AG04450 (cell line): ENCODE measurements at regions of chr3 and their contacts with region 1.

Region 1: DNA sequence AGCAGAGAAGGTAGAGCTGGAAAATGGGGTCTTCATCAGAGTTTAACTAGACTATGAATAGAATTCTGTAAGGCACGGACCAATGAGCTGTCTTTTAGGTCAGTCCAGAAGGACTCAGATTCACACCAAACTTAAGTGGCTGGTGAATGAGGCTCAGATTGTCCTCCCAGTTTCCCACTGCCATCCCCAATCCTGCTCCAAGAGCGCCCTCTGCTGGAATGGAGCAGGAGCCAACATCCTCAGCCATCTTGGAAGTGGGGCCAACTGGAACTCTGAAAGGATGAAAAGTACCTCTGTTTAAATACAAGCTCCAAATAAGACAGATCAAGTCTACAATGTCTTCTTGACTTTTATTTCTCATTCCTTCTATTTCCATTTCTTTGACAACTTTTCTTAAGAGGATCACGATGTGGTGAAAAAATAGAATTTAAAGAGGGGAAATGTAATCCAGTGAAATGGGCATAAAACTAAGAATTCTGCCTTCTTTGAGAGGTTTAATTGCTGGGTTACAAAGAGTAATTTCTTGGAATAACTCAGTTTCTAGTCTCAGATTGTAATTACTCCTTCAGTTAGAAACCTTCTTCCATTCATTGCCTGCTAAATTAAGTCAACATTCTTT is 217.1 kb upstream of the TPRG1 start:
- DNase-seq: peak; percentile 71
- H3K4me3 ChIP-seq: no peak overlapping the region
- H3K27ac ChIP-seq: no peak overlapping the region
- H3K27me3 ChIP-seq: no peaks in the 10 kb centered on the region
- CTCF ChIP-seq: peak; percentile 97

Region 2: DNA sequence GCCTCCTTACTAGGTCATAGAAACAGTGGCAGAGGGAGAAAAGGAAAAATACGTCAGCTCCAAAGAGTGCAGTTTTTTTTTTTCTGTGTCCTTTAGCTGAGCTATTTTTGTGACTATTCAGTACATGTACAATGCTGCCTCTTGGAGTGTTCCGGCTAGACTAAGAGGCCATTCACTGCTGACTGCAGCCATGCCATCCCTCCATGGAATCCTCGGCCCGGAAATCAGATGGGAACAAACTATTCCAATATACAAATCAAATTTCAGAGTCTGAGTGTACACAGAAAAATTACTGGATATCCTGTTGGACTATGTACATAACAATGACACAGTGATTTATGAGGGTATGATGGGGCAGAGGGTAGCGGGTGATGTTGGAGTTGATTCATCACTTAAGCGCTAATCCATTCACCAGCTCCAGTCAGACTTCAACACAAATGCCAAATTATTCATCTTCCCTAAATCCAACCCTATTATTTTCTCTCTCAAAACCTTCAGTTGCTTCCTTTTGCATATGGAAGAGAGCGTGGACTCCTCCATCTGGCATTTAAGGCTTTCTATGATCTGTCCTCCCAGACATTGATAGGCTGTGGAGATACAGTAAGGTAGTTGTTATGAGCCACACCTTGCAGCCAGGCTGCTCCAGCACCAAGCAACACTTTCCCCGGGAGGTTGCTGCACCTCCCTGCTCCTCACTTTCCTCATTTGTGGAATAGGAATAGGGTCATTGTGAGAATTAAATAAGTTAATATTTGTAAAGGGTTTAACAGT is 691.6 kb before region 1 on chr3:
- CTCF ChIA-PET with region 1: interaction called, 14 read pairs
- POLR2A ChIA-PET with region 1: no interaction called
- DNase-seq: no peak
- H3K4me3 ChIP-seq: no peak overlapping the region
- H3K27ac ChIP-seq: peak overlapping the region; percentile 39
- H3K27me3 ChIP-seq: no peaks in the 10 kb centered on the region
- CTCF ChIP-seq: no peak

Region 3: DNA sequence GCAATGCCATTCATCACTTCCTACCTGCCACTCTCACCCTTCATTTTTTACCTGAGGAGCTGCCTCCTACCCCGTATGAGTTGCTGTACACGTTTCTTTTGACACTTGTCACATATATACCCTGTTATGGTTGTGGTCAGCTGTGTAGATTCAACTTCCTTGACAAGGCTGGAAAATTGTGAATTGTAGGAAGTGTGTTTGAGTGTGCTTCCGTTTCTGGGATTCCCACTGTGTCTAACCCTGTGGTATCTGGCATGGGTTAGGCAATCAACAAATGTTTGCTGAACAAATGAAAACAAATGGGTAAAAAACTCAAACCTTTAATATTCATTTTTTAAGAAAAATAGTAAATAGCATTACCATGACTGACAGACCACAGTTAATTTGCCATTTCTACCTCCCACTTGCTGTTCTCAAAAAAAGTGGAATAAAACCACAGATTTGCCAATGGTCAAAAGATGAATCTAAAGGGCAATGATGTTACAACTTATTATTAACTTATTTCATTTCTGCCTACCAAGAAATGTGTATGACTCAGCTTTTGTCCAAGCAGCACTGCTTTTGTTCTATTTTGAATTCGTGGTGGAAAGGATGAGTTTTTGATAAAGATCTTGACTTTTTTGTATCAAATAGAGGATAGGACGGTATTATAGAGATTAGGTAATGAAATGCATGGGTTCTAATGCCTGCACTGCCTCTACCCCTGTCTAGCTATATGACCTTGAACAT is 396.2 kb before region 1 on chr3:
- CTCF ChIA-PET with region 1: interaction called, 31 read pairs
- POLR2A ChIA-PET with region 1: no interaction called
- DNase-seq: no peak
- H3K4me3 ChIP-seq: no peak overlapping the region
- H3K27ac ChIP-seq: no peak overlapping the region
- H3K27me3 ChIP-seq: no peaks in the 10 kb centered on the region
- CTCF ChIP-seq: no peak

Region 4: GRCh38 chr3:188631291-188632010 is 323.2 kb before region 1 on chr3:
- CTCF ChIA-PET with region 1: interaction called, 15 read pairs
- POLR2A ChIA-PET with region 1: no interaction called
- DNase-seq: peak; percentile 68
- H3K4me3 ChIP-seq: no peak overlapping the region
- H3K27ac ChIP-seq: peak overlapping the region; percentile 86
- H3K27me3 ChIP-seq: no peaks in the 10 kb centered on the region
- CTCF ChIP-seq: no peak

Region 5: DNA sequence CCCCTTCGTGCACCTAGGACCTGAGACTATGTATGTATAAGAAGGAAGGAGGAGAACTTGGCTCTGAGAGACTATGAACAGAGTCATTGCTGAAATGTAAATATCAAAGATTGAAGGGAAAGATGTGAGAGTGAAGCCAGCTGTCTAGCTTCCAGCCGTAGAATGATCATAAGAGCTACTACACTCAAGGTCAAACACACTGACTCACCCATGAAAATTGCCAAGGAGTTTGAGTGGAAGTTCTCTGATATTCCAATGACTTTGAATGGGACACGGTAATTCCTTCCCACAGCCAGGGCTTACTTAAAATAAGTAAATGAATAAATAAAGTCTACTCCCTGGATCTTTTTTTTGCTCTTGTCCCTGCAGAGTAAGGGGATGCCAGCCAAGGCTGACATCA is 181.8 kb before region 1 on chr3:
- CTCF ChIA-PET with region 1: interaction called, 10 read pairs
- POLR2A ChIA-PET with region 1: no interaction called
- DNase-seq: peak; percentile 86
- H3K4me3 ChIP-seq: no peak overlapping the region
- H3K27ac ChIP-seq: no peak overlapping the region
- H3K27me3 ChIP-seq: no peaks in the 10 kb centered on the region
- CTCF ChIP-seq: no peak

Region 6: DNA sequence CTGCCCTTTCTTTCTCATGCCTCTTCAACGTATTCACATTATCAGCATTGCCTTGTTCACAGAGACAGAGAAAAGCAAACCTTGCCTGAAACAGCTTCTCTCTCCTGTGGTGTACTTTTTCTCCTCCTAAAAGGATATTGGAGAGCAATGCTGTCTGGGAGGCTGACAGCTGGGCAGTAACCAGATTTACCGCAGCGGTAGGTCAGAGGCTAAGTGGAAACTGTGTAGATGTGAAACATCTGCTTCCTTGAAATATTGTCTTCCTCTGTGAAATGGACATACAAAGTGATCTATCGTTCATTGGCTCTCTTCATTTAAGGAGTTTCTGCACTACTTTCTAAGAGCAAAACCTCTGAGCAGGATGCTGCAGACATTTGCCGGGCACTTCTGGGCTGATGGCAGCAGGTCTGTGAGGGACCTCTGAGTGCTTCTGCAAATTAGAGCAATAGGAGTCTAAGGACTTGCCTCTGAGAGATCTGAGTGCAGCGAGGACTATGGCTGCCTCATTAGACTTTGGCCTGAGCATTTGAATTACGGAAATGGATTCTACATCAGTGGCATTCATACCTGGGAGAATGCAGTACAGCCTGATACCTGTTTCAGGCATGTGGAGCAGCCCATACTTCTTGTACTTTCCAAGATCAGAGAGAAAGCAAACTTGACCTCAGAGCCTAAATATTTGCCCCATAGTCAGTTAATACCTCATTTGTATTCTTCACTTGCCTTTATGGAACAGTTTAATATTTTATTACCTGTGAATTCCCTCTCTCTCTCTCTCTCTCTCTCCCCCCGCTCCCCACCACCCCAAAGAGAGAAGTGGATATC is 43.5 kb before region 1 on chr3:
- CTCF ChIA-PET with region 1: no interaction called
- POLR2A ChIA-PET with region 1: no interaction called
- DNase-seq: no peak
- H3K4me3 ChIP-seq: no peak overlapping the region
- H3K27ac ChIP-seq: no peak overlapping the region
- H3K27me3 ChIP-seq: no peaks in the 10 kb centered on the region
- CTCF ChIP-seq: no peak